Common myeloid progenitor, CD34-positive (primary cell): ENCODE measurements at regions of chr5 and their contacts with region 1.

Region 1: DNA sequence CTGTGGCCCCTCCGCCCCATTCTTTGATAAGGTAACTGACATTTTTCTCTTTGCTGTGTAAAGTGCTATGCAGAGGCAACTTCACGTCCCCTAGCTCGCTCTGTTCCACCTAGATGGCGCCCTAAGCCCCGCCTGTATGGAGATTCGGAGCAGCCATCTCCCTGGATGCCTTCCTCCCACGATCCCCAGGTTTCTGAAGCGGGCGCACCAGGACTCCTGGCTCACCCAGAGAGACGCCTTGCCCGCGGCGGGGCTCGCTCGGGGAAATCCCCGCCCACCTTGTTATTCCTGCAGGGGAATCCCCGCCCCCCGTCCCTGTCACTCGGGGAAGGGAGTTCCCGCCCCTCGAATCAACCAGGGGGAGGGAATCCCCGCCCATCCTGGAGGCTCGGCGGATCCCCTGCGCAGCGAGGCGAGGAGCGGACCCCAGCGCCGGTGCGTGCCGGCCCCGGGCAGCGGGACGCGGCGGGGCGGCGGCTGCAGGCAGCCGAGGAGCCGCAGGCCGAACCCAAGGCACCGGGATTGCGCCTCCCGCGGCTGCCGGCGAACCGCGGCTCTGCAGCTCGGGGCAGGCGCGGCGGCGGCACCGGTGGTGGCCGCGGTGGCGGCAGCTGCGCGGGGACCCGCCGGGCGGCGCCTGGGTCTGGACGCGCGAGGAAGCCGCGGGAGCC is at the start of gene PDZD2:
- DNase-seq: peak; percentile 77 to 87 (median 86)
- H3K4me3 ChIP-seq: peak within 1 kb of the TSS; percentile 59 to 92 (median 76)
- H3K27ac ChIP-seq: peak within 1 kb of the TSS in 1 of 2 experiments; percentile 75
- H3K4me1 ChIP-seq: peaks cover 2 to 66% (median 32%) of the 10 kb centered on the region in 4 experiments
- H3K27me3 ChIP-seq: peaks cover 0 to 17% (median 0%) of the 10 kb centered on the region in 5 experiments

Region 2: DNA sequence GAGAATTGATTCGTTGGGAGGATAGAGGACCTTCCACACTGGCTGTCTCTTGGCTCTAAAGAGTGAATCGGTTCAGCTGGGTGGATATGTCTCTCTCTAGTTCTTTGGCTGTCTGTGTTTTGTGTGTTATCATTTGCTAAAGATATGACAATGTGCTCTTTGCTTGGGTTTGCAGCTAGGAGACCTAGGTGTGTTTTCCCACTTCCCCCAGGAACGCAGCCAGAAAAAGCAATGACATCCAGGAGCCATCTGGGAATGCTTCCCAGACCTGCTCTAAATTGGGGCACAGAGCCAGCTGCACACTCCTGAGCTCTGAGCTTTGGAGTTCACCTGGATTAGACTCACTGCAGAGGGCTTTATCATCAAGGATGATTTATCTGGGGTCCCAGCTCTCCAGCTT is 12.7 kb before region 1 on chr5:
- CTCF ChIA-PET with region 1: interaction called, 23 read pairs
- POLR2A ChIA-PET with region 1: no interaction called
- DNase-seq: no peak
- H3K4me3 ChIP-seq: no peak overlapping the region
- H3K27ac ChIP-seq: no peak overlapping the region
- H3K4me1 ChIP-seq: peaks cover 0 to 2% (median 0%) of the 10 kb centered on the region in 4 experiments
- H3K27me3 ChIP-seq: peaks cover 0 to 4% (median 0%) of the 10 kb centered on the region in 5 experiments